ENCODE measurements at regions of chr10 and their contacts with region 1.

Region 1: GRCh38 chr10:48981310-48981907 is 41.8 kb upstream of the LRRC18 start:
- DNase-seq: peak in 3 of 4 donors; percentile 47 to 82 (median 59)
- ATAC-seq: peak; percentile 94
- H3K4me3 ChIP-seq: no peak overlapping the region
- H3K27ac ChIP-seq: no peak overlapping the region
- H3K4me1 ChIP-seq: no peaks in the 10 kb centered on the region
- H3K27me3 ChIP-seq: no peaks in the 10 kb centered on the region
- CTCF ChIP-seq: peak; percentile 75 to 90

Region 2: GRCh38 chr10:49119746-49120145 is 138.3 kb after region 1 on chr10:
- intact Hi-C with region 1: no loop called
- DNase-seq: no peak
- ATAC-seq: no peak
- H3K4me3 ChIP-seq: no peak overlapping the region
- H3K27ac ChIP-seq: no peak overlapping the region
- H3K4me1 ChIP-seq: peaks cover 0 to 9% of the 10 kb centered on the region in 2 donors
- H3K27me3 ChIP-seq: peaks cover 0 to 11% of the 10 kb centered on the region in 2 donors
- CTCF ChIP-seq: no peak

Region 3: DNA sequence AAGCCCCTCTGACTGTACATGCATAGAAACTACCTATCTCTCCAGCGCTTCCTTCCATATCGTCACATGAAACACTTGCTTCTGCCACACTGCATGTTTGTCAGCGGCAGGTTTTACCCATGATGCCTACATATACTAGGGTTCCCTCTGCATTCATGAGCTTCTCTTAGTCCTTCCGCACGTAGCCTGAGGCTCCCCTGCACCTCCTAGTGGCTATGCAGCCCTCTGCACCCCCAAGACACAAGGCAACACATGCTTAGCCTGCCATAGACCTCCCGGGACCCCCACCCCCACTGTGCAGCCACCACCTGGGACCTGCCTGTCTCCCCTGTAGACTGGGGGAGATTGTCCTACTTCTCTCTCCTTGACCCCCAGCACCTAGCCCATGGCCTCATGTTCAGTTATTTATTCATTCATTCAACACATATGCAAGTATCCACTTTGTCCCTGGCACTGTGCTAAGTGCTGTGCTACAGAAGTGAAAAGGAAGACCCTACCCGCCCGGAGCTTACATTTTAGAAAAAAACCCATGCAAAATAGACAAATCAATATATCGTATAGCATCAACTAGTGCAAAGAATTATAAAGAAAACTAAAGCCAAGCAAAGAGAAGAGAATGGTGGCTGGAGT is 183.3 kb after region 1 on chr10:
- intact Hi-C with region 1: loop called in 1 of 2 experiments (anchors 10 kb)
- DNase-seq: peak in 1 of 4 donors; percentile 60
- ATAC-seq: peak; percentile 82
- H3K4me3 ChIP-seq: no peak overlapping the region
- H3K27ac ChIP-seq: no peak overlapping the region
- H3K4me1 ChIP-seq: peaks cover 0 to 15% of the 10 kb centered on the region in 2 donors
- H3K27me3 ChIP-seq: no peaks in the 10 kb centered on the region
- CTCF ChIP-seq: peak; percentile 50 to 58

Region 4: DNA sequence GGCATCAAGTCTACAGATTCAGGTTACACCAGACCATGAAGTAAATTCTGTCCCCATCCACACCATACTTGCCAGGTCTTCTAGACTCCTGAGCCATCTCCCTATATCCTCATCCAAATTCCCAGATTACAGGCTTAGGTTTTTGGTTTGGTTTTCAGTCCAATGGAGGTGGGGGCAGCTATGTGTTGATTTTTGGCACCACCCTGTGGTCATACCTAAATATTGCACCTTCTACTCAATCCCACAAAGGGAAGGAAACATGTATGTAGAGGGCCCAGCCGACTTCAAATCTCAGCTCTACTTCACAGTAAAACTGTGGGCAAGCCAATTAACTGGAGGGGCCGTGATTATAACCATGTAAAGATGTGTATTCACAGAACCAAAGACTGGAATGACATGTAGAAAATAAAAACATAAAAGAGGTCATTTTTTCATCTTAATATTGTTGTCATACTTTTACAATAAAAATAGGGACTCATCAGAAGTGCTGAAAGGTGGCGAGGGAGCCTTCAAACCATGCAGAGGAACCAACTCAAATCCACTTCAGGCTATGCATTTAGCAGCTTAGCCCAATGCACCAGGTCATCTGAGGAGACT is 537.7 kb after region 1 on chr10:
- intact Hi-C with region 1: loop called in 1 of 2 experiments (anchors 10 kb)
- DNase-seq: peak in 2 of 4 donors; percentile 13 to 41
- ATAC-seq: peak; percentile 89
- H3K4me3 ChIP-seq: no peak overlapping the region
- H3K27ac ChIP-seq: no peak overlapping the region
- H3K4me1 ChIP-seq: peaks cover 0 to 6% of the 10 kb centered on the region in 2 donors
- H3K27me3 ChIP-seq: no peaks in the 10 kb centered on the region
- CTCF ChIP-seq: peak; percentile 49 to 68